GM10248 (cell line): ENCODE measurements at regions of chr20 and their contacts with region 1.

Region 1: GRCh38 chr20:59598625-59599310 is 5.6 kb upstream of the PHACTR3 start:
- DNase-seq: peak; percentile 81
- CTCF ChIP-seq: peak; percentile 90

Region 2: DNA sequence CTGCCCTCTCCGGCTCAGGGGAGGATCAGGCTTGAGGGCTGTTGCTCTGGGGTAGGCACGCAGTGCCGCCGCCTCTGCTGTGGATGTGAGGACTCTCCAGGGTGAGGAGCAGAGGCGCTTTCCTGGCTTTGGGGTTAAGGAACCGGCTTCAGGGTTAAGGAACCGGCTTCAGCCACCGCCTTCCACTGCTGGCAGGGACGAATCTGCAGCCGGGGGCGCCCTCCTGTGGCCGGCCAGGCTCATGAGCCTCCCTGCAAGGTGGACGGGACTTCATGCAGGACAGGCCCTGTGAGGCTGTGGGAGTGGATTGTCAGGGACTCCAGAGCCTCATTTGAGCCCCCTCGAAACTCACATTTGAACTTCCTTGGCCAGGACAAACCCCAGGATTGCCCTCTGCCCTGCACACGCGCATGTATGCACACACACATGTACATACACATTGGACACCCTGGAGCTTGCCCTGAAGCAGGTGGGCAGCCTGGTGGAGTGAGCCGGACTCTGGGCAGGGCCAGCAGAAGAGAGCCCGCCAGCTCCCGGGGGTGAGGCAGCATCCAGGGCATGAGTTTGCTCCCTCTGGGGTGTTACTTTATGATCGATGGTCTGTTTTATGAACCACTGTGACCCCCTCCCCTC is 152.4 kb after region 1 on chr20:
- CTCF ChIA-PET with region 1: interaction called, 13 read pairs
- POLR2A ChIA-PET with region 1: no interaction called
- DNase-seq: peak; percentile 87
- CTCF ChIP-seq: peak; percentile 94